ENCODE measurements at regions of chr2 and their contacts with region 1.

Region 1: DNA sequence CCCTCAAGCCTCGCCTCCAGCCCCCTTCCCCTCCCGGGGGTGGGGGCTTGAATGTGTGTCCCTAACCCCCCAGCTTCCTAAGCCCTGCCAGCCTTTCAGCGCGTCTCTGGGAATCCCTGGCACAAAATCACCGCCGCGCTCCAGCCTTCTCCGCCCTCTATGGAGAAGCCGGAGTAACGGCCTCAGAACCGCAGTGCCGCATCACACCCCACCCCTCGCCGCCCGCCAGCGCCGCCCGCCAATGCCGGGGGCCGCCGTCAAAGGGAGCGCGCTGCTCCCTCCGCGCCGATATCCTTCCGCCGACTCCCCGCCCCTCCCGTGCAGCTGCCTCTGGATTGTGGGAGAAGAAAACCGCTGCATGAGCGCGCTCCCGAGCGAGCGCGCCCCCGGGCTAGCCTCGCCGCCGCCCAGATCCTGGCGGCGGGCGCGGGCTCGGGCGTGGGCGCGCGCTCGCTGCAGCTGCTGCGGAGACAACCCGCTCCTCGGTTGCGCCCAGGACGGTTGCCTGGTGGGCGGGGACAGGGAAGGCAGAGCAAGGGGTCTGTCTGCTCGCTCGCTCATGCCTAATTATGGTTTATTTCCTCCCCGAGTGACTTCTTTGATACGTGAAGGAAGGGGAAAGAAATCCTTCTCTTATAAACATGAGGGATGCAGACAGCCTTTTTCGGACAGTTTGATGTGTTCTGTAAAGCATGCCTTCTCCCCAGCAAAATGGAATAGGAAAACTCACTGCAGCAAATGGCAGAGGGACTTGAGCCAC is at the start of gene CCDC88A:
- DNase-seq: peak; percentile 98
- total RNA-seq, gene CCDC88A: 8.8 and 18.5 TPM in 2 replicates

Region 2: GRCh38 chr2:55252832-55253231 is 167.0 kb before region 1 on chr2:
- in situ Hi-C with region 1: no loop called
- DNase-seq: no peak

Region 3: GRCh38 chr2:55500025-55500424 is 80.2 kb after region 1 on chr2:
- in situ Hi-C with region 1: loop called (anchors 10 kb)
- DNase-seq: peak; percentile 49

Region 4: GRCh38 chr2:55519938-55520885 is 100.4 kb after region 1 on chr2:
- in situ Hi-C with region 1: no loop called
- DNase-seq: peak; percentile 25